Activated naive CD4-positive, alpha-beta T cell treated with anti-CD3 and anti-CD28 coated beads for 36 hours (primary cell): ENCODE measurements at regions of chr19 and their contacts with region 1.

Region 1: DNA sequence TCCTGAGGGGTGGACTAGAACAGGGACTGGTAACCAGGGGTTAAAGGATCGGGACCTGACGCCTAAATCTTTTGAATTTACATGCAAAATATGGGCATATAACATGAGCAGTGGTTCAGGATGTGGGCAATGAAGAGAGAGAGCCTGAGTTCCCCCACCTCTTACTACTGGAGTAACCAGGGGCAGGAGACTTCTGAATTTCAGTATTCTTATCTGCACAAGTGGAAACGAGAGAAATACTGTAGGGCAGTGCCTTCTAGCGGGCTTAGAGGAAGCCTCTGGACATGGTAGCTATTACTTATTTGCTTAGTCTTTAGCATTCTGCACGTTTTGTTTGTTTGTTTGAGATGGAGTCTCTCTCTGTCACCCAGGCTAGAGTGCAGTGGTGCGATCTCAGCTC is 26.3 kb downstream of the BCAT2 start:
- DNase-seq: no peak
- H3K4me3 Mint-ChIP-seq: no peak overlapping the region
- H3K27ac Mint-ChIP-seq: no peak overlapping the region
- H3K4me1 Mint-ChIP-seq: peaks cover 2% of the 10 kb centered on the region
- H3K27me3 Mint-ChIP-seq: peaks cover 3% of the 10 kb centered on the region

Region 2: GRCh38 chr19:48830088-48830487 is 45.5 kb after region 1 on chr19:
- CTCF ChIA-PET with region 1: interaction called, 10 read pairs
- intact Hi-C with region 1: loop called (anchors 1 kb)
- DNase-seq: no peak
- H3K4me3 Mint-ChIP-seq: no peak overlapping the region
- H3K27ac Mint-ChIP-seq: no peak overlapping the region
- H3K4me1 Mint-ChIP-seq: no peaks in the 10 kb centered on the region
- H3K27me3 Mint-ChIP-seq: no peaks in the 10 kb centered on the region

Region 3: GRCh38 chr19:48835734-48836088 is 51.2 kb after region 1 on chr19:
- CTCF ChIA-PET with region 1: interaction called, 121 read pairs
- intact Hi-C with region 1: loop called (anchors 1 kb)
- DNase-seq: peak; percentile 98
- H3K4me3 Mint-ChIP-seq: peak overlapping the region; percentile 73
- H3K27ac Mint-ChIP-seq: no peak overlapping the region
- H3K4me1 Mint-ChIP-seq: peaks cover 20% of the 10 kb centered on the region
- H3K27me3 Mint-ChIP-seq: peaks cover 2% of the 10 kb centered on the region

Region 4: DNA sequence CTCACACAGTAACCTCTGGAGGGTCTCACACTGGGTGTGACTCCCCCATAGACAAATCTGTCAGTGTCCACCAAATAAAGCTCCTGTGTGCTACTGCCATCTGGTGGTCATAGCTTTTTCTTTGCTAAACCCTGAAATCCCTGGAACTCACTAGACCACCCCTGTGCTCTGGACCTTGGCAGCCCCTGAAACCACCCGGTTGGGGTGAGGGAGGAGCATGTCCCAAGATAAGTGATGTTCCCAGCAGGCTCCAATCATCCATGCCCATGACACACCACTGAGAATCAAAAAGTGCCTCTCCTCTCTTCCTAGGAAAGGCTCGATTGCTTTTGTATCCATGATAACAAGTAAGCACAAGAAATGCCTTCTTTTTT is 58.2 kb after region 1 on chr19:
- CTCF ChIA-PET with region 1: interaction called, 121 read pairs
- intact Hi-C with region 1: loop called (anchors 1 kb)
- DNase-seq: peak; percentile 70
- H3K4me3 Mint-ChIP-seq: no peak overlapping the region
- H3K27ac Mint-ChIP-seq: no peak overlapping the region
- H3K4me1 Mint-ChIP-seq: no peaks in the 10 kb centered on the region
- H3K27me3 Mint-ChIP-seq: no peaks in the 10 kb centered on the region